Endothelial cell of umbilical vein (primary cell): ENCODE measurements at regions of chr12 and their contacts with region 1.

Region 1: GRCh38 chr12:123983822-123984485 is 10.9 kb downstream of the ZNF664 start:
- DNase-seq: peak; percentile 60
- H3K4me3 ChIP-seq: no peak overlapping the region
- H3K27ac ChIP-seq: no peak overlapping the region
- H3K4me1 ChIP-seq: no peaks in the 10 kb centered on the region
- H3K27me3 ChIP-seq: no peaks in the 10 kb centered on the region
- CTCF ChIP-seq: peak; percentile 56 to 62
- POLR2A ChIP-seq: no peak

Region 2: DNA sequence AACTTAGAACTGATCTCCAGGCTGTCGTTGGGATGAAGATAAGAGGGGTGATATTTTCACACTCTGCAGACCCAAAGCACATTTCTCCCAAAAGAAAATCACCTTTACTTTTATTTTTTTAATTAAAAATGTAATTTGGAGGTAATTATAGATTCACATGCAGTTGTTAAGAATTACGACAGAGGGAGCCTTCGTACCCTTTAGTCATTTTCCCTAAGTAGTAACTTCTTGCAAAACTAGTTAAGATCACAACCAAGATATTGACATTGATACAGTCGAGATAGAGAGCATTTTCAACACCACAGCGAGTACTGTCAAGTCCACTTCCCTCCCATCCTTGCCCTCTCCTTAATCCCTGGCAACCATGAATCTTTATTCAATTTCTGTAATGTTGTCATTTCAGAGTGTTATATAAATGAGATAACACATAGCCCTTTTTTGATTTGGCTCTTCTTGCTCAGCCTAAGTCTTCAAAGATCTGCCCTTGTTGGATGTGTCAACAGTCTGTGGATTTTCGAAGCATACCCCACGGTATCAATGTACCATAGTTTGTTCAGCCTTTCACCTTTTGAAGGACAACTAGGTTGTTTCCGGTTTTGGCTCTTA is 182.3 kb before region 1 on chr12:
- CTCF ChIA-PET with region 1: interaction called, 4 read pairs
- POLR2A ChIA-PET with region 1: no interaction called
- dilution Hi-C with region 1: no loop called
- intact Hi-C with region 1: loop called (anchors 5 kb)
- DNase-seq: peak; percentile 7
- H3K4me3 ChIP-seq: no peak overlapping the region
- H3K27ac ChIP-seq: no peak overlapping the region
- H3K4me1 ChIP-seq: no peaks in the 10 kb centered on the region
- H3K27me3 ChIP-seq: no peaks in the 10 kb centered on the region
- CTCF ChIP-seq: peak in 1 of 2 donors; percentile 25
- POLR2A ChIP-seq: no peak

Region 3: DNA sequence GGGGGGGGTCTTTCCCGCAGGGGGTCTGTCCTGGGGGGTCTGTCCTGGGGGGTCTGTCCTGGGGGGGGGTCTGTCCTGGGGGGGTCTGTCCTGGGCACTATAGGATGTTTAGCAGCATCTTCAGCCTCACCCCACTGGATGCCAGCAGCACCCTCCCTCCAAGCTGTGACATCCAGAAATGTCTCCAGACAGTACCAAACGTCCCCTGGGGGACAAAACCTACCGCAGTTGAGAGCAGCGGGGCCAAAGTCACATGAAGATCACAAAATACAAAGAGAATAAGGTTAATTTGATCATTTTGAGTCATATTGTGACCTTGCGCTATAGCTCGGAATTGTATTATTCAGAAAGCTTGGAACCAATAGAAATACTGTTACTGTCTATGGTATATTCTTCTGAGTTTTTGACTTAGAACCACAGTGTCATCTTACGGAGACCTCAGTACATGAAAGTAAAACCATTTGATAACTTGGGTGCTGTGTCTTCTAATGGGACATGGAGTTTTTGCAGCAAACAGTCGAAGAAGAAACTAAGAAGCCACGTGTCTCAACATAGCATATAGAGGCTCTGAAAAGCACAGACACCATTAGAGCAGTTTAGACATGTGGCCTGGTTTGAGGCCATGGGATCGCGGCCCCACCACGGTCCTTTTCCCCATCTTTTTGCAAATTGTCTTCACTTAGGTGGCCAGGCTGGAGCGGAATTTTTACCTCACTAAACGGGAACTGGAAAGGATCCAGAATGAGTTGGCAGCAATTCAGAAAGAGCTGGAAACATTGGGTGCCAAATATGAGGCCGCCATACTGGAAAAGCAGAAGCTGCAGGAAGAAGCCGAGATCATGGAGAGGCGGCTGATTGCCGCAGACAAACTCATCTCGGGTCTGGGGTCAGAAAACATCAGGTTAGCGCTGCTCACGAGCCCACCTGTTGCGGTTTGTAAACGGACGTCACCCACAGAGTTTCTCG is 71.3 kb before region 1 on chr12:
- CTCF ChIA-PET with region 1: interaction called, 13 read pairs
- POLR2A ChIA-PET with region 1: no interaction called
- dilution Hi-C with region 1: no loop called
- intact Hi-C with region 1: no loop called
- DNase-seq: no peak
- H3K4me3 ChIP-seq: no peak overlapping the region
- H3K27ac ChIP-seq: no peak overlapping the region
- H3K4me1 ChIP-seq: no peaks in the 10 kb centered on the region
- H3K27me3 ChIP-seq: peaks cover 2 to 9% of the 10 kb centered on the region in 2 experiments
- CTCF ChIP-seq: no peak
- POLR2A ChIP-seq: no peak

Region 4: DNA sequence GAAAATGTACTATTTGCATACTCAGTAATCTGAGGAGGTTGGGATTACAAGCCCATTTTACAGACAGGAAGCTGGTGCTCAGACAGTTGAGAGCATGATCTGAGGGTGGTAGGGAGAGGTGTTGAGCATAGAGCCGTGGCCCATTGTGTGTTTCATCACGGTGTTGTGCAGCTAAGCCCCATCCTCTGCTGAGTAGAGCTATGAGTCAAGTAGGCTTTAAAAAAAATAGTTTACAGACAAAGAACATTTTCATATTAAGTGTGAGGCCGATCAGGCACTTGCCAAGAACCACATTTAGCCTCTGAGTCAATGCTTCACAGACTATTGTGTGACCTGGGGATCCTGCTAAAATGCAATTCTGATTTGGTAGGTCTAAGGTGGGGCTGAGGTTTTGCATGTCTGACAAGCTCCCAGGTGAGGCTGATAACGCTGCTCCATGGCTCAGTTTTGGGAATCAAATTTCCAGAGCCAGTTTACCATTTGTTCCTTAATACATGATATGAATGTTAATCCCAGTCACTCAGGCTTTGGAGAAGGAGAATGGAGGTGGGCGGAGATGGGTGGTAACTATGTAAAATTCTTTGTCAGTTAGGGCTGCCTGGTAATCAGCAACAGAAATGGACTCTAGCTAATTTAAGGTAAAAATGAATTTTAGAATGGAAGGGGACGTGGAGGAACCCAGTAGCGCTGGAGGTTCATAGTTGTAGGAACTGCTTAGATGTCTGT is 11.2 kb after region 1 on chr12:
- CTCF ChIA-PET with region 1: interaction called, 10 read pairs
- POLR2A ChIA-PET with region 1: no interaction called
- dilution Hi-C with region 1: no loop called
- intact Hi-C with region 1: no loop called
- DNase-seq: peak; percentile 24
- H3K4me3 ChIP-seq: no peak overlapping the region
- H3K27ac ChIP-seq: no peak overlapping the region
- H3K4me1 ChIP-seq: peaks cover 16% of the 10 kb centered on the region
- H3K27me3 ChIP-seq: no peaks in the 10 kb centered on the region
- CTCF ChIP-seq: no peak
- POLR2A ChIP-seq: no peak